ENCODE measurements at regions of chr10 and their contacts with region 1.

Region 1: GRCh38 chr10:79242620-79243152 is 104.6 kb upstream of the PPIF start:
- DNase-seq: peak; percentile 62 to 72
- H3K4me3 ChIP-seq: peak overlapping the region; percentile 66
- H3K27ac ChIP-seq: no peak overlapping the region
- H3K4me1 ChIP-seq: peaks cover 32% of the 10 kb centered on the region
- H3K27me3 ChIP-seq: no peaks in the 10 kb centered on the region
- CTCF ChIP-seq: no peak

Region 2: DNA sequence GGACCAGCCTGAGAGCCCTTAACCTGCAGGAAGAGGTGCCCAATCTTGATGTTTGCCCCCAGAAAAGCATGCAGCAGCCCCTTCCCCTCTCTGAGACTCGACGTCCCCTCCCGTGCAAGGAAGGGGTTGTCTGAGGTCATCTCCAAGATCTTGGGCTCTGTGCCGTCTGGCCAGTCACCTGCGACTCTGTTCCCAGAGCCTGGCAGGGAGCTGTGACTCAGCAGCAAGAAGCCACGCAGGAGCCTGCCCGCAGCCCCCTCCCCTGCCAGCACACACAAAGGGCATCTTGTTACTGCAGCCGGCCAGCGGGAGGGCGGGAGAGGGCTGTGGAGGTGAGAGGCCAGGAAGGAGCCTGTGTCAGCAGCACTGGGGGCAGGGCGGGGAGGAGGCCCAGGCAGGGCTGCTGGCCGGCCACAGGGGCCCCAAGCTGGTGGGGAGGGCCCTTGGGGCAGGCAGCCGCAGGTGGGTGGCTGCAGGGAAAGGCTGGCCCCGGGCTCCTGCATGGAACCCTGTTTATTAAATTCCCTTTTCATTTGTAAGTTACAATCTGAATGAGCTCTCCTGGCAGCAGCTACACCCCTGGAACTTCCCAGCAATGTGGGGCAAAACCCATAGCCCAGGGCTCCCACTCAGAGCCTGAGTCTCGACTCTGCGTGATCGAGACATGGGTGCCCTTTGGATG is 277.6 kb before region 1 on chr10:
- CTCF ChIA-PET with region 1: no interaction called
- POLR2A ChIA-PET with region 1: interaction called, 15 read pairs
- intact Hi-C with region 1: no loop called
- DNase-seq: peak; percentile 94 to 96
- H3K4me3 ChIP-seq: no peak overlapping the region
- H3K27ac ChIP-seq: peak overlapping the region; percentile 70
- H3K4me1 ChIP-seq: peaks cover 39% of the 10 kb centered on the region
- H3K27me3 ChIP-seq: no peaks in the 10 kb centered on the region
- CTCF ChIP-seq: no peak

Region 3: GRCh38 chr10:79221110-79222051 is 21.3 kb before region 1 on chr10:
- CTCF ChIA-PET with region 1: no interaction called
- POLR2A ChIA-PET with region 1: no interaction called
- intact Hi-C with region 1: no loop called
- DNase-seq: no peak
- H3K4me3 ChIP-seq: no peak overlapping the region
- H3K27ac ChIP-seq: no peak overlapping the region
- H3K4me1 ChIP-seq: no peaks in the 10 kb centered on the region
- H3K27me3 ChIP-seq: no peaks in the 10 kb centered on the region
- CTCF ChIP-seq: no peak

Region 4: GRCh38 chr10:79289811-79290210 is 47.1 kb after region 1 on chr10:
- CTCF ChIA-PET with region 1: no interaction called
- POLR2A ChIA-PET with region 1: no interaction called
- intact Hi-C with region 1: loop called (anchors 2 kb)
- DNase-seq: peak; percentile 66 to 82
- H3K4me3 ChIP-seq: no peak overlapping the region
- H3K27ac ChIP-seq: no peak overlapping the region
- H3K4me1 ChIP-seq: peaks cover 43% of the 10 kb centered on the region
- H3K27me3 ChIP-seq: no peaks in the 10 kb centered on the region
- CTCF ChIP-seq: no peak

Region 5: GRCh38 chr10:79298403-79299244 is 55.9 kb after region 1 on chr10:
- CTCF ChIA-PET with region 1: no interaction called
- POLR2A ChIA-PET with region 1: no interaction called
- intact Hi-C with region 1: loop called (anchors 2 kb)
- DNase-seq: peak; percentile 85 to 92
- H3K4me3 ChIP-seq: no peak overlapping the region
- H3K27ac ChIP-seq: peak overlapping the region; percentile 85
- H3K4me1 ChIP-seq: peaks cover 52% of the 10 kb centered on the region
- H3K27me3 ChIP-seq: no peaks in the 10 kb centered on the region
- CTCF ChIP-seq: no peak

Measured in PC-9 (cell line).